K562 (cell line): ENCODE measurements at regions of chr22 and their contacts with region 1.

Region 1: GRCh38 chr22:19178656-19179496 is at the start of gene SLC25A1:
- DNase-seq: peak; percentile 100
- ATAC-seq: peak; percentile 86
- H3K4me3 ChIP-seq: peak within 1 kb of the TSS; percentile 76
- H3K27ac ChIP-seq: peak within 1 kb of the TSS; percentile 85
- H3K4me1 ChIP-seq: peaks cover 31 to 89% of the 10 kb centered on the region in 2 experiments
- H3K27me3 ChIP-seq: peaks cover 10 to 22% of the 10 kb centered on the region in 2 experiments; a peak in 4 of 5 replicates
- CTCF ChIP-seq: no peak
- EP300 ChIP-seq: no peak
- POLR2A ChIP-seq: no peak
- RAD21 ChIP-seq: no peak
- polyA plus RNA-seq, gene SLC25A1: 11.0 to 23.7 TPM

Region 2: GRCh38 chr22:19122143-19122751 is 56.6 kb before region 1 on chr22 and contains the start of gene DGCR2:
- CTCF ChIA-PET with region 1: no interaction called
- POLR2A ChIA-PET with region 1: interaction called, 12 read pairs
- in situ Hi-C with region 1: no loop called
- intact Hi-C with region 1: no loop called
- DNase-seq: peak; percentile 100
- ATAC-seq: peak; percentile 96
- H3K4me3 ChIP-seq: peak within 1 kb of the TSS; percentile 77
- H3K27ac ChIP-seq: peak within 1 kb of the TSS; percentile 77
- H3K4me1 ChIP-seq: peaks cover 30 to 52% of the 10 kb centered on the region in 2 experiments
- H3K27me3 ChIP-seq: peaks cover 18 to 26% of the 10 kb centered on the region in 2 experiments; a peak in 4 of 5 replicates
- CTCF ChIP-seq: no peak; a peak in 1 of 6 replicates
- EP300 ChIP-seq: 0 out of 2 replicates have a peak, but pooled peaks have one; percentile 3
- POLR2A ChIP-seq: peak; percentile 98
- RAD21 ChIP-seq: no peak
- polyA plus RNA-seq, gene DGCR2: 0.69 to 0.70 TPM

Region 3: DNA sequence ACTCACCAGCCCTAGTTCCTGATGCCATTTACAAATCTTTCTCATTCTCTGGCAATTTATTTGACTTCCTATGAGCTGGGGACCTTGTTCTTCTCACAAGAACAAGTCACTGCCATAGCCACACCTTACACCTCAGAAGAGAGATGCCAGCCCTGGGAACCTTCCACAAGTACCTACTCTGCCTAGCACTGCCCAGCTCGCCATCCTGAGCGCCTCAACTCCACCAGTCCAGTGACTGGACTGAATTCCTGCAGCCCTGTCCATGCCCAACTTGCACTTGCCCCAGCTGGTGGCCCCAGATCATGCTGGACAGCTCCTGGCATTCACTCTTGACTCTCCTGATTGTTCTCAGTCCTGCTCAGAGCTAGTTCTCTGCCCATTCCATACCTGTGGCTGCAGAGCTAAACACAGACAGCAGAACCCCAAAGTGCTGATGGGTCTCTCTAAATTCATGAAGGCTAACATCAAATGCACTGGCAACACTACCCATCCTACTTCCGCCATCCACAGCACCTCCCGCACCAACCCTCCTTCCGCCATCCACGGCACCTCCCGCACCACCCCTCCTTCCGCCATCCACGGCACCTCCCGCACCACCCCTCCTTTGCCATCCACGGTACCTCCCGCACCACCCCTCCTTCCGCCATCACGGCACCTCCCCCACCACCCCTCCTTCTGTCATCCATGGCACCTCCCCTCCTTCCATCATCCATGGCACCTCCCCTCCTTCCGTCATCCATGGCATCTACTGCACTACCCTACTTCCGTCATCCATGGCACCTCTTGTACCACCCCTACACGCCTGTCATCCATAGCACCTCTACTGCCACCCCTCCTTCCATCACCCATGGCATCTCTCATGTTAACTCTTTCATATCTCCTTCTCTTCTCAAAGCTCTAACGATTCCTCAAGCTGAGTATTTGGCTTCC is 23.3 kb after region 1 on chr22:
- CTCF ChIA-PET with region 1: no interaction called
- POLR2A ChIA-PET with region 1: interaction called, 191 read pairs
- in situ Hi-C with region 1: no loop called
- intact Hi-C with region 1: no loop called
- DNase-seq: peak; percentile 79 to 99 (median 93)
- ATAC-seq: peak; percentile 50
- H3K4me3 ChIP-seq: peak overlapping the region; percentile 19
- H3K27ac ChIP-seq: no peak overlapping the region
- H3K4me1 ChIP-seq: peaks cover 14 to 15% of the 10 kb centered on the region in 2 experiments
- H3K27me3 ChIP-seq: peaks cover 59 to 75% of the 10 kb centered on the region in 2 experiments
- CTCF ChIP-seq: peak in 1 of 3 experiments; percentile 5; a peak in 1 of 6 replicates
- EP300 ChIP-seq: no peak
- POLR2A ChIP-seq: no peak
- RAD21 ChIP-seq: no peak

Region 4: DNA sequence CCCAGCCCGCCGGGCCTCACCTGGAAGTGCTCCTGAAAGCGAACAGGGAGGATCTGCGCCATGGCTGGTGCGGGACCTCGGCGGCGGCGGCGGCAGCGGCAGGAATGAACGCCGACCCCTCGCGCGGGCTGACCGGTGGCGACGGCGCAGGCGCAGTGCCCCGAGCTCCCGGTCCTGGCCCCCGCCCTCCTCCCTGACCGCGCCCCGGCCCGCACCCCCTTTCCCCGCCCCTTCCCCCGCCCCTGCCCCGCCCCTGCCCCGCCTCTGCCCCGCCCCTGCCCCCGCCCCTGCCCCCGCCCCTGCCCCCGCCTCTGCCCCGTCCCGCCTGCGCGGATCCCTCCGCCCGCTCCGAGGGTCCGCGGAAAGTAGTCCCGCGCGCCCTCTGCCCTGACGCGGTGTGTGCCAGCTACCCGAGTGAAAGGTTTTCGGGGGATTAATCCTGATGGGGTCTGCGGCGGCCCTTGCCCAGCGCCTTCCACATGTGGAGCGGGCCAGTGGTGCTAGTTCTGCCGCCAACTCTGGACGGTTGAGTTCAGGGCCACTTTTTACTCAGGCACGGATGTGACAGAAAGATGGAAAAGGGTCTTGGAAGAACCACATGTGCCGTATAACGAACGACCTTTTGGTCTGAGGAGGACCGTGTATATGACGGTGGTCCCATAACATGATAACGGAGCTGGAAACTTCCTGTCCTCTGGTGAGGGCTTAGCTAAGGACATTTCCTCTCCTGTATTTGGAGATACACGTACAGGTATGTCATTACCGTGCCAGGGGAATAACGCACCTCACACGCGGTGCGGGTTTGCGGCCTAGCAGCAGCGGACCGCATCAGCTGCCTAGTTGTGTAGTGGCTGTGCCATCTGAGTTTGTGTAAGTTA is 112.9 kb after region 1 on chr22 and contains the start of gene CLTCL1:
- CTCF ChIA-PET with region 1: no interaction called
- POLR2A ChIA-PET with region 1: interaction called, 6 read pairs
- in situ Hi-C with region 1: no loop called
- intact Hi-C with region 1: loop called (anchors 2 kb)
- DNase-seq: peak; percentile 94 to 100 (median 100)
- ATAC-seq: peak; percentile 84
- H3K4me3 ChIP-seq: peak within 1 kb of the TSS; percentile 61
- H3K27ac ChIP-seq: peak within 1 kb of the TSS; percentile 67
- H3K4me1 ChIP-seq: peaks cover 25% of the 10 kb centered on the region in 2 experiments; a peak in 4 of 5 replicates
- H3K27me3 ChIP-seq: peaks cover 34 to 35% of the 10 kb centered on the region in 2 experiments; a peak in 4 of 5 replicates
- CTCF ChIP-seq: peak in 1 of 3 experiments; percentile 10; a peak in 2 of 6 replicates
- EP300 ChIP-seq: peak; percentile 14; the same call in 1 of the 2 replicates
- POLR2A ChIP-seq: peak; percentile 89
- RAD21 ChIP-seq: peak in 1 of 2 experiments; percentile 44; a peak in 2 of 4 replicates
- polyA plus RNA-seq, gene CLTCL1: 1.1 to 2.1 TPM

Region 5: DNA sequence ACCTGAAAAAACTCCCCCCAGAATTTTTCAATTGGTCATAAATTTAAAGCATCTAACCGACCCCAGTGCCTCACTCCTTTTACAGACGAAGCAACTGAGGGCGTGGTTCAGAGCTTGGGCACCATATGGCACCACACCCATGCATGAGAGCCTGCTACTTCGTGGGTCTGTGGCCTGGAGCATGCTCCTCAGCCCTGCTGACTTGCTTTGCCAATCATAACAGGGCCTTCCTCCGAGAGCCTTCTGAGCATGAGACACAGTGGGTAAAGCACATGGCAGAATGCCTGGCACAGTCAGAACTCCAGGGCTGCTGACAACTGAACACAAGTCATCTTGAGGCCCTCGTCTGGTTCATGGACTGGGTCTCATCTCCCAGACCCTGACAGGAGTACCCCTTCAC is 219.3 kb after region 1 on chr22:
- CTCF ChIA-PET with region 1: no interaction called
- POLR2A ChIA-PET with region 1: interaction called, 11 read pairs
- in situ Hi-C with region 1: no loop called
- intact Hi-C with region 1: no loop called
- DNase-seq: no peak
- ATAC-seq: no peak
- H3K4me3 ChIP-seq: no peak overlapping the region
- H3K27ac ChIP-seq: peak overlapping the region; percentile 73
- H3K4me1 ChIP-seq: peaks cover 31 to 33% of the 10 kb centered on the region in 2 experiments
- H3K27me3 ChIP-seq: no peaks in the 10 kb centered on the region
- CTCF ChIP-seq: no peak
- EP300 ChIP-seq: no peak
- POLR2A ChIP-seq: no peak
- RAD21 ChIP-seq: no peak; a peak in 1 of 4 replicates

Region 6: DNA sequence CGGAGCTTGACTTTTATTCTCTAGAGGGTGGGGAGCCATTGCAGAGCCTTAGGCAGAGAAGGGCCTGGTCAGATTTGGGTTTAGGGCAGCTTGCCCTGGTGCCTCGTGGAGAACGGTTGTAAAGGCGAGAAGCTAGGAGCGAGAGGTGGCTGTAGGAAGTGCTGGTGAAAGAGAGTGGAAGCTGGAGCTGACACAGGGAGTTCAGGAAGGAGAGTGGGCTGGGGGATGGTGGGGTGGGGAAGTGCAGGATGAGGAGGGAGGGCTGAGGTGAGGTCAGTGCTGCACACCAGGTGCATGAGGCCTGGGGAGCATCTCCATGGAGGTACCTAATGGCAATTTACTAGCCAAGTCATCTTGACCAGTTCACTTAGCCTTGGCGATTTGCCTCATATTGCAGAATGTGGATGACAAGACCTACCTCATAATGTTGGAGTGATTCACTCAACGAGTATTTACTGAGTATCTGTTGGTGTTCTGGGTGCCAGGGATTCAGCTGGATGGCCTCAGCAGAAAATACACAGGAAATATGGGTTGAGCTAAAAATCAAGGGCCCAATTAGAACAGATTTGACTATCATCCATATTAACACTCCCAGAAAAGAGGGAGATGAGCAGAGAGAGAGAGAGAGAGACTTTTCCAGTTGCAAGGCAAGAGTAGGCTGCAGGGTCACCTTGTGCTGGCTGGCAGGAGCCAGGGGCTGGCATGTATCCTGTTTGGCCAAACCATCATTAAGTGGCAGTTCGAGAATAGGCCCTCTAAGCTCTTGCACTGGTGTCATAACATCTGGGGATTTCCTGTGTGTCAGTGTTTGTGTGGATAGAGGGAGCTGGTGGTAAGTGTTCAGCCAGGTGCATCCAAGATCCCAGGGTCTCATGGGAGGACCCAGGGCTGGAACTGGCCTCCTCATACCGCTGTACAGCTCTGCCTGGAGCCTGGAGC is 389.7 kb after region 1 on chr22:
- CTCF ChIA-PET with region 1: no interaction called
- POLR2A ChIA-PET with region 1: no interaction called
- in situ Hi-C with region 1: no loop called
- intact Hi-C with region 1: no loop called
- DNase-seq: peak in 2 of 4 experiments; percentile 25 to 33
- ATAC-seq: no peak
- H3K4me3 ChIP-seq: no peak overlapping the region
- H3K27ac ChIP-seq: no peak overlapping the region
- H3K4me1 ChIP-seq: peaks cover 0 to 8% of the 10 kb centered on the region in 2 experiments; a peak in 2 of 5 replicates
- H3K27me3 ChIP-seq: peaks cover 68 to 69% of the 10 kb centered on the region in 2 experiments
- CTCF ChIP-seq: no peak
- EP300 ChIP-seq: no peak
- POLR2A ChIP-seq: no peak
- RAD21 ChIP-seq: no peak